ENCODE measurements at regions of chr3 and their contacts with region 1.

Region 1: DNA sequence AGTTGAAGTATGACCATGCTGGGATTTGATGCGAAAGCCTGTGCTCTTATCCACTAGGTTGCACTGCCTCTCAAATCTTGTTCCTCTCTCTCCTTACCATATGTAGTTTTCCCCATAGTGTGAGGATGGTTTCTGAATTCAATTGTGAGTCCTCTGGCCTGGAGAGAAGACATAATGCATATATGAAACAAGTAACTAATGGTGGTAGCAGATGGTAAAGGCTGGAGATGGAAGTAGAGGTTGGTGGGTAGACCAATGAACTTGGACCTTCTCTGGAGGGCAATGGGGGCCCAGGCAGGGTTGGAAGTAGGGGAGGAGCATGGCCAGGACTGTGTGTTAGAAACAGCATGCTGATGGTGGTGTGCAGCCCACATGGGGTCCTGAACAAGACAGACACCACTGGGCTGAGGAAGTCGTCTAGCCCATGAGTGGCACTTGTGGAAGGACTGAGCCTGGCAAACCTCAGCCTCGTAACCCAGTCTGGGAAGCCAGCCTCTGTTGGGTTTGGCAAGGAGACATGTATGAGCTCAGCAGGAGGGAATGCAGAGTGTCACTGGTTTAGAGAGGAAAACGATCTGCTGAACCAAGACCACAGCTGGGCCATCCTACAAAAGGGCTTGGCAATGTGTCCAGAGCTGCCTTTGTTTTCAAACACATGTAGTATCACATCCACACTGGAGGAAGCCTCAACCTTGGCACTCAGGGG is 18.5 kb upstream of the LMCD1 start:
- DNase-seq: peak; percentile 81 to 90
- ATAC-seq: peak; percentile 90 to 98
- H3K4me3 ChIP-seq: no peak overlapping the region
- H3K27ac ChIP-seq: peak overlapping the region; percentile 79 to 96 (median 88)
- H3K4me1 ChIP-seq: peaks cover 35 to 37% of the 10 kb centered on the region in 2 donors
- H3K27me3 ChIP-seq: no peaks in the 10 kb centered on the region
- CTCF ChIP-seq: no peak
- POLR2A ChIP-seq: no peak

Region 2: DNA sequence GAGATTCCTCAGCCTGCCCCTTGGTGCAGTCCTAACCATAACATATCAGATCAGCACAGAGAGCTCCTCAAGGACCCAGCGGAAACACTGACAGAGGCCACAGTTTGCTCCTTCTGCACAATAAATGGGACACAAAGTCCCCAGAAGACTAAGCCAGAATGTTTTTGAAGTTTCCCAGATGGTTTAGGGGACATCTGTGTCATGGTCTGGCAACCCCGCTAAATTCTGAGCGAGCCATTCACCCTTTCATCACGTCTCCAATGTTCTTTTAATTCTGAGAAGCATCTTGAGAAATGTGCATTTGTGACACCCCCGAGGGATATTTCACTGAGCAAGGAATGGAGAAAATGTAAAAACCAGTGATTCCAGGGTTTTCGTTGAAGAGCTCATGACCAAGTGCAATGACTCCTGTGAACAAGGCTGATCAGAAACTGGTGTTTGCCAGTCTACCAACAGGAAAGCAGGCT is 46.4 kb before region 1 on chr3:
- in situ Hi-C with region 1: no loop called
- intact Hi-C with region 1: no loop called
- DNase-seq: peak in 1 of 2 donors; percentile 55
- ATAC-seq: peak; percentile 69 to 83
- H3K4me3 ChIP-seq: no peak overlapping the region
- H3K27ac ChIP-seq: peak overlapping the region in 3 of 4 donors; percentile 24 to 65 (median 33)
- H3K4me1 ChIP-seq: no peaks in the 10 kb centered on the region
- H3K27me3 ChIP-seq: no peaks in the 10 kb centered on the region
- CTCF ChIP-seq: no peak
- POLR2A ChIP-seq: no peak

Region 3: GRCh38 chr3:8607234-8608040 is 124.3 kb after region 1 on chr3:
- in situ Hi-C with region 1: loop called in 3 of 4 experiments (anchors 5 to 10 kb)
- intact Hi-C with region 1: loop called (anchors 2 kb)
- DNase-seq: peak; percentile 66 to 74
- ATAC-seq: peak; percentile 95 to 100
- H3K4me3 ChIP-seq: no peak overlapping the region
- H3K27ac ChIP-seq: peak overlapping the region in 2 of 4 donors; percentile 26 to 37
- H3K4me1 ChIP-seq: peaks cover 27 to 28% of the 10 kb centered on the region in 2 donors
- H3K27me3 ChIP-seq: no peaks in the 10 kb centered on the region
- CTCF ChIP-seq: peak; percentile 77 to 85 (median 82)
- POLR2A ChIP-seq: no peak

Region 4: GRCh38 chr3:8622873-8623691 is 140.0 kb after region 1 on chr3:
- in situ Hi-C with region 1: no loop called
- intact Hi-C with region 1: loop called (anchors 1 kb)
- DNase-seq: peak; percentile 27 to 55
- ATAC-seq: peak; percentile 77 to 81
- H3K4me3 ChIP-seq: peak overlapping the region in 1 of 4 donors; percentile 4
- H3K27ac ChIP-seq: no peak overlapping the region
- H3K4me1 ChIP-seq: peaks cover 11 to 12% of the 10 kb centered on the region in 2 donors
- H3K27me3 ChIP-seq: no peaks in the 10 kb centered on the region
- CTCF ChIP-seq: peak; percentile 86 to 95 (median 92)
- POLR2A ChIP-seq: no peak

Region 5: GRCh38 chr3:8739757-8740491 is 256.8 kb after region 1 on chr3:
- in situ Hi-C with region 1: no loop called
- intact Hi-C with region 1: loop called (anchors 10 kb)
- DNase-seq: no peak
- ATAC-seq: peak; percentile 57 to 73
- H3K4me3 ChIP-seq: no peak overlapping the region
- H3K27ac ChIP-seq: peak overlapping the region; percentile 27 to 68 (median 50)
- H3K4me1 ChIP-seq: peaks cover 43 to 75% of the 10 kb centered on the region in 2 donors
- H3K27me3 ChIP-seq: no peaks in the 10 kb centered on the region
- CTCF ChIP-seq: no peak
- POLR2A ChIP-seq: no peak

Region 6: GRCh38 chr3:8776406-8776805 is 293.3 kb after region 1 on chr3:
- in situ Hi-C with region 1: no loop called
- intact Hi-C with region 1: no loop called
- DNase-seq: no peak
- ATAC-seq: no peak
- H3K4me3 ChIP-seq: no peak overlapping the region
- H3K27ac ChIP-seq: no peak overlapping the region
- H3K4me1 ChIP-seq: no peaks in the 10 kb centered on the region
- H3K27me3 ChIP-seq: peaks cover 0 to 3% (median 0%) of the 10 kb centered on the region in 3 donors
- CTCF ChIP-seq: no peak
- POLR2A ChIP-seq: no peak

Measured in gastrocnemius medialis (tissue), 4 donors.